Activated CD4-positive, alpha-beta T cell treated with anti-CD3 and anti-CD28 coated beads, Interleukin-2, amount 10 ng/mL, durations not matched to agents 24 days and 14 days (primary cell): ENCODE measurements at regions of chr19 and their contacts with region 1.

Region 1: DNA sequence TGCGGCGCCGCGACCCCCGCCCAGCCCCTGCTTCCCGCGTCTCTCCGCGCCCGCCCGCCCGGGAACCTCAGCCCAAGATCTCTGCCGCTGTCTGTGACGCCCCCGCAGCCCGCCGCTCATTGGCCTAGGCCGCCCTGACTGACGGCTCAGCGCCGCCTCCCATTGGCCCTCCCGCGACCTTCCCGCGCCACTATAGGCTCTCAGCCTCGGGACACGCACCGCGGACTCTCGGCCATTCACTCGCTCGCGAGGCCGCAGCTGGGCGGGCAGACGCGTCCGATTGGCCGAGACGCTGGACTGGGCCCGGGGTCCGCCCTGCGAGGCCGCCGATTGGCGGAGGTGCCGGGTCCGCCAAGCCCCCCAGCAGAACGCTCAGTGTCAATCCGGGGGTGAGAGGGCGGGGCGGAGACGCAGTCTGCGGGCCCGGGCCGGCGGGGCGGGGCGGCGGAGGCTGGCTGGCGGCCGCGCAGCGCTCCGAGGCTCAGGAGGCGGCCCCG is at the start of gene PRKACA:
- DNase-seq: peak; percentile 100
- H3K4me3 Mint-ChIP-seq: peak within 1 kb of the TSS; percentile 98
- H3K27ac Mint-ChIP-seq: peak within 1 kb of the TSS; percentile 94
- H3K4me1 Mint-ChIP-seq: peaks cover 34% of the 10 kb centered on the region
- H3K27me3 Mint-ChIP-seq: no peaks in the 10 kb centered on the region
- total RNA-seq, gene PRKACA: 62.6 and 64.7 TPM in 2 replicates

Region 2: DNA sequence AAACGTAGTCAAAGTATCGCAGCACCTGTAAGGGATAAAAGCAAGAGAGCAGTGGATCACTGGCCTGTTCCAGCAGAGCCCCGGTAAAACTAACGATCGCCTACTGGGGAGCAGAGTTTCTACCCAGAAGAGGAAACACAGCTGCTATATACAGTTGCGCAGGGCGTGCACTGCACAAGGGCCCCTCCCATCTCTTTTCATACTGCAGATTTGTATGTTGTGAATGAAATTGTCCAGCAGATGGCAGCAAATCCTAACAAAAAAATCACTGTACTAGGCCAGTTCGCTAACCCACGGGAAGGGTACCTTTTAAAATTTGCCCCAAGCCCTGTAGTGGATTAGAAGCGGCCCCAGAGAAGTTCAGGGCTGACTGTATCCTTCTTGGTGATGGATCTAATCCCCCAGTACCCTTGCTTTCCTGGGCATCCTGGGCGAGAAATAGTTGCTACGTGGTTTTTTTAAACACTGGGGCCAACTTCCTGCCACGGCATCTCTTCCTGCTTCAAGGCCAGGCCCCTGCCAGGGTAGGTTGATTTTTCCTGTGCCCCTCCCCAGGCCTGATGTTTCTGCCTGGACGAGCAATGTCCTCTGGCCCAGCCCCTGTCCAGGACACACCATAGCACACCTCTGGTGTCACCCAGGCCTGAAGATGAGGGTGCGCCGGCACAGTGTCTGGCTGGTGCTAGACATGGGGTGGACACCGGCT is 840.5 kb before region 1 on chr19:
- intact Hi-C with region 1: loop called (anchors 10 kb)
- DNase-seq: peak; percentile 93
- H3K4me3 Mint-ChIP-seq: peak overlapping the region; percentile 32
- H3K27ac Mint-ChIP-seq: peak overlapping the region; percentile 79
- H3K4me1 Mint-ChIP-seq: peaks cover 7% of the 10 kb centered on the region
- H3K27me3 Mint-ChIP-seq: peaks cover 8% of the 10 kb centered on the region

Region 3: DNA sequence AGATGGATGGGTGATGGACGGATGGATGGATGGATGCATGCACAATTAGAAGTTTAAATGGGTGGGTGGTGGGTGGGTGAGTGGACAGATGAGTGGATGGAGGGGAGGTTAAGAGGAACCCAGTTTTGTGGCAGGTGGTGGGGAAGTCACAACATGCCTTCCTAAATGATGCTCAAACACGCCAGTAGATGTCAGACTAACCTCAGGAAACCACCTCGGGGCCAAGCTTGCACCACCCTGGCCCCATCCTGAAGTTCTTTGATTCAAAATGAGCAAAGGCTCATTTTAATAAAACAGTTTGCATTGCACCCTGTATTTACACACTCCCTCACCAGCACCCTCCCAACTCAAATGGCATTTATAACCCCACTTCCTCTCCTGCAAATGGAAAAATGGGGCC is 520.1 kb before region 1 on chr19:
- intact Hi-C with region 1: loop called (anchors 5 kb)
- DNase-seq: peak; percentile 85
- H3K4me3 Mint-ChIP-seq: no peak overlapping the region
- H3K27ac Mint-ChIP-seq: no peak overlapping the region
- H3K4me1 Mint-ChIP-seq: peaks cover 2% of the 10 kb centered on the region
- H3K27me3 Mint-ChIP-seq: no peaks in the 10 kb centered on the region

Region 4: DNA sequence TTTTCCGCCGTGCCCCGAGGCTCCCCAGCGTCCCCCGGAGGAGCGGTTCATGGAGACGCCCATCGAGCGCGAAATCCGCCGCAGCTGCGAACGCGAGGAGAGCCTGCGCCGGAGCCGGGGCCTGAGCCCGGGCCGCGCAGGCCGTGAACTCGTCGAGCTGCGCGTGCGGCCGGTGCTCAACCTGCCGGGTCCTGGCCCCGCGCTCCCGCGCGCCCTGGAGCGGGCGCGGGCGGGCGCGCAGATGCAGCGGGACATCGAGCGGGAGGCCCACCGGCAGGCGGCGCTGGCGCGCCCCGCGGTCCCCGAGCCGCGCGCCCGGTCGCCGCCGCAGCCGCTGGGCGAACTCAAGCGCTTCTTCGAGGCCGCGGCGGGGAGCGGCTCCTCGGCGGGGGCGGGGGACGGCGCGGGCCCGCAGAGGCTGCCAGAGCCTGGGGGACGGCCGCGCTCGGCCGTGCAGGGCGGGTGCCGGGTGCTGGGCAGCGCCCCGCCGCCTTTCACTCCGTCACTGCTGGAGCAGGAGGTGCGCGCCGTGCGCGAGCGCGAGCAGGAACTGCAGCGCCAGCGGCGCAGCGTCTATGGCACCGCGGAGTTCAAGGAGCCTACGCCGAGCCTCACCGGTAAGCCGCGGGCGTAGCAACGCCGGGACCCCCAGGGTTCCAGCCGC is 44.3 kb before region 1 on chr19:
- intact Hi-C with region 1: loop called (anchors 1 kb)
- DNase-seq: peak; percentile 94
- H3K4me3 Mint-ChIP-seq: peak overlapping the region; percentile 99
- H3K27ac Mint-ChIP-seq: peak overlapping the region; percentile 99
- H3K4me1 Mint-ChIP-seq: peaks cover 16% of the 10 kb centered on the region
- H3K27me3 Mint-ChIP-seq: peaks cover 6% of the 10 kb centered on the region

Region 5: DNA sequence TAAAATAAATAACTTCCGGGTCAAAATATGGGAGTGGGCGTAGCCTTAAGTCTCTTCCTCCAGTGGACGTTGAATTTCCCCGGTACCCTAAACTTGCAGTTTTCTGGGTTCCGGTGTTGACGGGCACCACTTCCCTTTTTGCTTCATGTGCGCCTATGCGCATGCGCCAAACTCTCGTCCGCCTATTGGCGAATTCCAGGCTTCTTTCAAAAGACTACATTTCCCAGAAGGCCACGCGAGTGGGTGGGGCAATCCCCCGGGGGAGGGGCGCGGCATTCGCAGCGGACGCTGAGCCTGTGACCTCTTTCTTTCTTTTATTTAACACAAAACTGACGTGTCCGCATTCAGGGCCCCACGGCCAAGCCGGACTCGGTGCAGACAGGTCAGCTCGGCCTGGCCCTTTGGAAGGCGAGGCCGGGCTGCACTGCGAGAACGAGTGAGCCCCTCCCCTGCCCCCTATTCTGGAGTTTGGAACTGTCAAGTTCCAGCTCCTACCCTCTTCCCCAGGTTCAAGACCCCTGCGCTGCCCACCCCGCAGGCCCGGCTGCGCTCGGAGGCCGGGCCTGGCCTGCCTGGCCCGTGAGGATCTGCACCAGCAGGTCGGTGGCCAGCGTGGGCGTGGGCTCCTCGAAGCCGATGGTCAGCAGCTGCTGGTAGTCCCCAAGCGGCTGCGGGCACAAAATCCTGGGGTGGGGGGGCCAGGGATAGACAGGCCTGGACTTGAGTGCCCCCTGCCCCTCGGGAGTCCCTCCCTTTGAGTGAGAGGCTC is 36.2 kb before region 1 on chr19:
- intact Hi-C with region 1: loop called (anchors 2 kb)
- DNase-seq: peak; percentile 100
- H3K4me3 Mint-ChIP-seq: peak overlapping the region; percentile 96
- H3K27ac Mint-ChIP-seq: peak overlapping the region; percentile 93
- H3K4me1 Mint-ChIP-seq: peaks cover 19% of the 10 kb centered on the region
- H3K27me3 Mint-ChIP-seq: no peaks in the 10 kb centered on the region

Region 6: GRCh38 chr19:14091081-14091812 is 26.5 kb before region 1 on chr19:
- intact Hi-C with region 1: loop called (anchors 1 kb)
- DNase-seq: peak; percentile 94
- H3K4me3 Mint-ChIP-seq: peak overlapping the region; percentile 92
- H3K27ac Mint-ChIP-seq: peak overlapping the region; percentile 98
- H3K4me1 Mint-ChIP-seq: peaks cover 17% of the 10 kb centered on the region
- H3K27me3 Mint-ChIP-seq: no peaks in the 10 kb centered on the region